Transverse colon (tissue), 4 donors: ENCODE measurements at regions of chr10 and their contacts with region 1.

Region 1: GRCh38 chr10:86110156-86110786 is 256.3 kb downstream of the GRID1 start:
- DNase-seq: no peak
- H3K4me3 ChIP-seq: no peak overlapping the region
- H3K27ac ChIP-seq: no peak overlapping the region
- H3K4me1 ChIP-seq: no peaks in the 10 kb centered on the region
- H3K27me3 ChIP-seq: no peaks in the 10 kb centered on the region
- CTCF ChIP-seq: no peak
- EP300 ChIP-seq: no peak
- POLR2A ChIP-seq: no peak

Region 2: GRCh38 chr10:86079088-86079487 is 31.2 kb before region 1 on chr10:
- in situ Hi-C with region 1: no loop called
- intact Hi-C with region 1: loop called (anchors 1 kb)
- DNase-seq: no peak
- H3K4me3 ChIP-seq: no peak overlapping the region
- H3K27ac ChIP-seq: no peak overlapping the region
- H3K4me1 ChIP-seq: no peaks in the 10 kb centered on the region
- H3K27me3 ChIP-seq: no peaks in the 10 kb centered on the region
- CTCF ChIP-seq: no peak
- EP300 ChIP-seq: no peak
- POLR2A ChIP-seq: no peak

Region 3: DNA sequence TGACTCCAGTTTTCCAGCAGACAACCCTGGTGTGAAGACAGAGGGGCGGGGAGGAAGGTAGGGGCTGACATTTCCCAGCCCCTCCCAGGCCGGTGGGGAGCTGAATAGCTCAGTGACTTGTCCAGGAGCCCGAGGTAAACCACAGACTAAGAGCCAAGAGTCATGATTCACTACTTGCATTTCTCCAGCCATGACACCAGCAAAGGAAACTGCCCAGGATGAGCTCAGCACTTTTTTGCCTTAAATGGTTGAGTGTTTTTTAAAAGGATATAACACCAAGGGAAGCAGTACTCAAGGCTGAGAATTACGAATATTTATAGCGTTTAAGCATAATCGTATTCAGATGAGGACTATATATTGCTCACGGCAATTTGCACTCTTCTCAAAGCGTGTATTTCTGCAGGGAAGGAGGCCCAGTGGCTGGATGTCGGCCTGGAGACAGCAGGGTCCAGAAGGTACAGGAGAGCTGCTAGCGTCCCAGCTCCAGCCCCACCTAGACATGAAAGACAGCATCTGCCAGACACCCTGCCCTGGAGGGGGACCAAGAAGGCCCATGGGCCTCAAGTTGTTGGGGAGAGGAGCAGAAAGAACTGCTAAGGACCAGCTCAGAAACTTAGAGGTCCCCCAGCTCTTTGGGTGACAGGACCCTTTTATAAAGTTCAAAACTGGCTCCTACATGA is 115.0 kb after region 1 on chr10:
- in situ Hi-C with region 1: no loop called
- intact Hi-C with region 1: no loop called
- DNase-seq: no peak
- H3K4me3 ChIP-seq: no peak overlapping the region
- H3K27ac ChIP-seq: no peak overlapping the region
- H3K4me1 ChIP-seq: no peaks in the 10 kb centered on the region
- H3K27me3 ChIP-seq: no peaks in the 10 kb centered on the region
- CTCF ChIP-seq: no peak
- EP300 ChIP-seq: no peak
- POLR2A ChIP-seq: no peak

Region 4: GRCh38 chr10:86599729-86600128 is 489.5 kb after region 1 on chr10:
- in situ Hi-C with region 1: no loop called
- intact Hi-C with region 1: no loop called
- DNase-seq: peak; percentile 64
- H3K4me3 ChIP-seq: no peak overlapping the region
- H3K27ac ChIP-seq: peak overlapping the region in 1 of 4 donors; percentile 56
- H3K4me1 ChIP-seq: peaks cover 0 to 4% (median 0%) of the 10 kb centered on the region in 4 donors
- H3K27me3 ChIP-seq: no peaks in the 10 kb centered on the region
- CTCF ChIP-seq: no peak
- EP300 ChIP-seq: no peak
- POLR2A ChIP-seq: no peak